Panc1 (cell line): ENCODE measurements at regions of chr21 and their contacts with region 1.

Region 1: GRCh38 chr21:43646550-43647260 is 12.6 kb downstream of the HSF2BP start:
- DNase-seq: peak; percentile 84
- ATAC-seq: peak; percentile 96
- H3K4me3 ChIP-seq: no peak overlapping the region; a peak in 1 of 4 replicates
- H3K27ac ChIP-seq: peak overlapping the region; percentile 65; the same call in 1 of the 2 replicates
- H3K4me1 ChIP-seq: peaks cover 11% of the 10 kb centered on the region; the same call in 1 of the 2 replicates
- H3K27me3 ChIP-seq: no peaks in the 10 kb centered on the region
- CTCF ChIP-seq: peak; percentile 92

Region 2: GRCh38 chr21:43315244-43316137 is 331.2 kb before region 1 on chr21:
- CTCF ChIA-PET with region 1: no interaction called
- POLR2A ChIA-PET with region 1: interaction called, 12 read pairs
- in situ Hi-C with region 1: no loop called
- intact Hi-C with region 1: no loop called
- DNase-seq: no peak
- ATAC-seq: no peak
- H3K4me3 ChIP-seq: no peak overlapping the region
- H3K27ac ChIP-seq: no peak overlapping the region
- H3K4me1 ChIP-seq: no peaks in the 10 kb centered on the region
- H3K27me3 ChIP-seq: no peaks in the 10 kb centered on the region
- CTCF ChIP-seq: no peak

Region 3: DNA sequence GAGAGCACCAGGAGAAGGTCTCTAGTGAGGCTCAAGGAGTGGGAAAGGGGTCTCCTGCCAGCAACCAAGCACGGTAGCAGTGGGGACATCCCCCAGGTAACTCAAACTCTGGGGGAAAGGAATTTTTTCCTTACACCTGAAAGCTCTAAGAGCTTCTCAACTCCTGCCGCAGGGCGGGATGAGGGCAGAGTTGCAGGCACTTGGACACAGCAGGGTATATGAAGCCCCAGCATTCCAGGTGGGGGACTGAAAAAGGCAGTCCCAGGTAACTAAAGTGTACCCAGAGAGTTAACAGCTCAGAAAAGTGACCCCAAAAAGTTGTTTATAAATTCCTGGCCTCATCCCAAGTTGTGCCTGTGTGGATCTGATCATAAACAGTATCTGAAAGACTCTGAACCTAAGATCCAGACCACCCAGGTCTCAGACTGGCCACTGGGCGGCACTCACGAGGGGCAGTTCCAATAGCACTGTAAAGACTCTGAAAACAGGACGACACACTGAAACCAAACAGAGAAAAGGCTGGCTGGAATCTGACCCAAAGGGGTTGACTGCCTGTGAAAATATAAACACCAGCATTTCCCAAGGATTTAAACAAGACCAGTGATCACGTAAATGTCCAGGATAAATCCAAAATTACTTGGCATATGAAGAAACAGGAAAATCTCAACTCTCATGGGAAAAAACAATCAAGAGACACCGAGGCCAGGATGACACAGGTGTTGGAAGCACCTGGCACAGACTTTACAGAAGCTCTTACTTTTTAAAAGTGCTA is 34.9 kb before region 1 on chr21:
- CTCF ChIA-PET with region 1: no interaction called
- POLR2A ChIA-PET with region 1: no interaction called
- in situ Hi-C with region 1: no loop called
- intact Hi-C with region 1: loop called (anchors 5 kb)
- DNase-seq: no peak
- ATAC-seq: peak; percentile 92
- H3K4me3 ChIP-seq: no peak overlapping the region
- H3K27ac ChIP-seq: peak overlapping the region; percentile 54
- H3K4me1 ChIP-seq: peaks cover 16% of the 10 kb centered on the region
- H3K27me3 ChIP-seq: no peaks in the 10 kb centered on the region
- CTCF ChIP-seq: peak; percentile 86